Esophagus muscularis mucosa (tissue), 4 donors: ENCODE measurements at regions of chr13 and their contacts with region 1.

Region 1: GRCh38 chr13:19822673-19823072 is 39.9 kb upstream of the PSPC1 start:
- DNase-seq: no peak
- H3K4me3 ChIP-seq: no peak overlapping the region
- H3K27ac ChIP-seq: no peak overlapping the region
- H3K4me1 ChIP-seq: no peaks in the 10 kb centered on the region
- H3K27me3 ChIP-seq: no peaks in the 10 kb centered on the region
- CTCF ChIP-seq: no peak
- EP300 ChIP-seq: no peak
- POLR2A ChIP-seq: no peak

Region 2: DNA sequence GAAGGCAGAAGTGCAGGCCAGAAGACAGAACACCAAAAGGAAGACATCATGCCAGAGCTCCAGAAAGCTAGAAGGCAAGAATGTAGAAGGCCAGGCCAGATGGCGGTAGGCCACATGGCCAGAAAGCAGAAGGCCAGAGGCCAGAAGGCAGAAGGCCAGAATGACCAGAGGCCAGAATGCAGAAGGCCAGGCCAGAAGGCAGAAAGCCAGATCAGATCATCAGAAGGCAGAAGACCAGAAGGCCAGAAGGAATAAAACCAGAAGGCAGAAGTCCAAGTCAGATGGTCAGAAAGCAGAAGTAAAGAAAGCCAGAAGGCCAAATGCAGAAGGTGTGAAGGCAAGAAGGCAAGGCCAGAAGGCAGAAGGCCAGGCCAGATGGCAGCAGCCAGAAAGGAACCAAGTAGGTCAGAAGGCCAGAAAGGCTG is 826.0 kb before region 1 on chr13:
- intact Hi-C with region 1: no loop called
- DNase-seq: no peak
- H3K4me3 ChIP-seq: no peak overlapping the region
- H3K27ac ChIP-seq: no peak overlapping the region
- H3K4me1 ChIP-seq: peaks cover 19 to 43% (median 26%) of the 10 kb centered on the region in 4 donors
- H3K27me3 ChIP-seq: no peaks in the 10 kb centered on the region
- CTCF ChIP-seq: no peak
- EP300 ChIP-seq: no peak
- POLR2A ChIP-seq: no peak

Region 3: GRCh38 chr13:19794635-19795423 is 27.8 kb before region 1 on chr13:
- intact Hi-C with region 1: loop called (anchors 5 kb)
- DNase-seq: no peak
- H3K4me3 ChIP-seq: no peak overlapping the region
- H3K27ac ChIP-seq: no peak overlapping the region
- H3K4me1 ChIP-seq: no peaks in the 10 kb centered on the region
- H3K27me3 ChIP-seq: no peaks in the 10 kb centered on the region
- CTCF ChIP-seq: no peak
- EP300 ChIP-seq: no peak
- POLR2A ChIP-seq: no peak

Region 4: GRCh38 chr13:20301403-20302071 is 478.9 kb after region 1 on chr13:
- intact Hi-C with region 1: no loop called
- DNase-seq: peak; percentile 89
- H3K4me3 ChIP-seq: peak overlapping the region; percentile 26 to 36 (median 28)
- H3K27ac ChIP-seq: no peak overlapping the region
- H3K4me1 ChIP-seq: peaks cover 0 to 9% (median 4%) of the 10 kb centered on the region in 4 donors
- H3K27me3 ChIP-seq: peaks cover 0 to 39% (median 10%) of the 10 kb centered on the region in 4 donors
- CTCF ChIP-seq: no peak
- EP300 ChIP-seq: no peak
- POLR2A ChIP-seq: no peak